ENCODE measurements at regions of chr22 and their contacts with region 1.

Region 1: DNA sequence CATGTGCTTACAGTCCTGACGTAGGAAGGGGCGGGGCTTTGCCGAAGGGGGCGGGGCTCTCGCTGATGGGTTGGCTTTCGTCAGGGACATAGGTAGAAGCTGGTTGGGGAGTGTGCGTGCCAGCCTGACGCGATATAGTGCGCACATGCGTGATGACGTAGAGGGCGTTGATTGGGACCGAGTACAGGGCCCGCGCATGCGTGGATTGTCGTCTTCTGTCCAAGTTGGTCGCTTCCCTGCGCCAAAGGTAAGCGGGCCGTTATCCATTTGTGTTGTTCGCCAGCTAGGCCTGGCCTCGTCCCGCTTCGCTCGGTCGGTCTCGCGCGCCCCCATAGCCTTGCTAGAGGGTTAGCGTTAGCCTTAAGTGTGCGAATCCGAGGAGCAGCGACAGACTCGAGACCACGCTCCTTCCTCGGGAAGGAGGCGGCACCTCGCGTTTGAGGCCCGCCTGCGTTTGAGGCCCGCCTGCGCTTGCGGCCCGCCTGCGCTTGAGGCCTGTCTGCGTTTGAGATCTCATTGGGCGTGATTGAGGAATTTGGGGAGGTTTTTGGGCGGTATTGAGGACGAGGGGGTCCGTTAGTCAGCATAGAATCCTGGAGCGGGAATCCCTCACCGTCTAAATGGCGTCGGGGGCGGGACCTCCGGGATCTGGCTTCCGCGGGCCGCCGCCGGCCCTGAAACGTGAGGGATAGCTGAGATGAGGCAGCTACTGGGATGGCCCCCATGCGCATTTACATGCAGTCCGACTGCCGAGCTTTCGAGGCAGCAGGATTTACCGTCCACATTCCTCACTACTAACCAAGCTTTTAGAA is at the start of gene XRCC6:
- DNase-seq: peak; percentile 99
- H3K4me3 Mint-ChIP-seq: peak within 1 kb of the TSS; percentile 99
- H3K27ac Mint-ChIP-seq: peak within 1 kb of the TSS; percentile 99
- H3K4me1 Mint-ChIP-seq: peaks cover 34% of the 10 kb centered on the region
- H3K27me3 Mint-ChIP-seq: no peaks in the 10 kb centered on the region
- total RNA-seq, gene XRCC6: 400 and 414 TPM in 2 replicates

Region 2: DNA sequence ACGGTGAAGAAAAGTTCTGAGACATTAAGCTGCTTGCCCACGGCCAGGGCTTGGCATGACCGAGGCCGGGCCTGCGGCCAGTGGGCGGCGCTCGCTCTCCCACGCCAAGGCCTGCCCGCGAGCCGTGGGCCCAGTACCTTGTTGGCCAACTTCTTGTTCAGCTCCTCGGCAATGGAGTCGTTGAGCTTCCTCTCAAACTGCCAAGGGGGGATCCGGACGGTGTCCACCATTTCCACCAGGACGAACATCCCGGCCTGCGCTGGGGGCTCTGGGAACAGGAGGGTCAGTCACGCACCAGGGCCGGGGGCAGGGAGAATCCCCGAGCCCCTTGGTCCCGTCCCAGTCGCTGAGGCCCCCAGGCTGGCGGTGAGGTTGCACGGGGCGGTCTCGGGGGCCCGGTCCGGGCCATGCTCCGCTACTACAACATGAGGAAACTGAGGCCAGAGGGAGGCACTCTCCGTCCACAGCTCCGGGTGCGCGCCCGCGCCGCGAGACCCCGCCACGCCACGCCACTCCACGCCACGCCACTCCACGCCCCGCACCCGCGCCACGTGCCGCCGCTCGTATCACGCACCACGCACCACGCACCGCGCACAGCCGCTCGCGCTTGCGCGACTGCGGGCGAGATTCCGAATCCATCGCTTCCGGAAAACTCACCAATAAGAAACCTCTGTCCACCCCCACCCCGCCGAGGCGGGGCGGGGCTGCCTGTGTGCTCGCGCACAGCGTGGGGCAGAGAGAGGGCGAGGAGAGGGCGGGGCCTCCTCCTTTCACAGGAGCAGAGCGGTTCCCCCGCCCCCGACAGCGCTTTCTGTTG is 77.2 kb before region 1 on chr22 and contains the start of gene POLR3H:
- intact Hi-C with region 1: loop called (anchors 1 kb)
- DNase-seq: peak; percentile 99
- H3K4me3 Mint-ChIP-seq: peak within 1 kb of the TSS; percentile 95
- H3K27ac Mint-ChIP-seq: peak within 1 kb of the TSS; percentile 89
- H3K4me1 Mint-ChIP-seq: peaks cover 29% of the 10 kb centered on the region
- H3K27me3 Mint-ChIP-seq: no peaks in the 10 kb centered on the region
- total RNA-seq, gene POLR3H: 49.2 and 50.6 TPM in 2 replicates

Region 3: GRCh38 chr22:41578818-41579217 is 42.5 kb before region 1 on chr22:
- intact Hi-C with region 1: no loop called
- DNase-seq: no peak
- H3K4me3 Mint-ChIP-seq: no peak overlapping the region
- H3K27ac Mint-ChIP-seq: no peak overlapping the region
- H3K4me1 Mint-ChIP-seq: peaks cover 3% of the 10 kb centered on the region
- H3K27me3 Mint-ChIP-seq: no peaks in the 10 kb centered on the region

Region 4: DNA sequence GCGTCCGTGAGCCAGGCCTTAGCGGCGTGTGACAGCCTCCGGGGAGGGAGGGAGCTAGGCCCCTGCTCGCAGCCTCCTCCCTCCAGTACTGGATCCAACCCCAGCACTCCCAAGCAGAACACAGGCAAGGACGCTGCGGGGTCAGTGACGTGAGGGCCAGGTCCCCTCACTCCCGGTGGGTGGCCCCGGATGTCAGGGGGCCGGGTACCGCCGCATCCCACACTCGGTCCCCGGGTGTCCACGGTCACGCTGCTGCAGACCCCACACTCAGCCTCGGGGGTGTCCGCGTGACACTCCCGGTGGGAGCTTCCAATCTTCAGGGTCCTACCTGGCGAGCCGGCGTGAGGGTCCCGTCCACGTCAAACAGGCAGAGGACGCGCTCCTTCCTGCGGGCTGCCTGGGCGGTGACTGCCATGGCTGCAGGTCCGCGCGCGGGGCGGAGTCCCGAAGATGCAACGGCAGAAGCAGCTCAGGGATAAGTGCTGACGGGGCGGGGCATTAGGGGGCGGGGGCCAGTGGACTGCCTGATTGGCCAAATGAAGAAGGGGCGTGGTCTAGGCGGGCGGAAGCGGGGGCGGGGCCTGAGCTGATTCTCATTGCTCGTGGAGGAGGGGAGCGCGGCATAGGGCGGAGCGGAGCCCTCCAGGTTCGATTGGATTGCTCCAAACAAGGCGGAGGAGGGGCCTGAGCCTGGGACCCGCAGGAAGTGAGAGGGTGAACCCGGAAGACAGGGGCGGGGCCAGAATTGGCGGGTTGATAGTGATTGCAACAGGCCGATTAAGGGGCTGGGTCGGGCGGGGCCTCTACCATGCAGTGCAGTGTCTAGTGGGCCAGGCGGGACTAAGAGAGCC is 31.7 kb before region 1 on chr22 and contains the start of gene PMM1:
- intact Hi-C with region 1: loop called (anchors 1 kb)
- DNase-seq: peak; percentile 100
- H3K4me3 Mint-ChIP-seq: peak within 1 kb of the TSS; percentile 95
- H3K27ac Mint-ChIP-seq: peak within 1 kb of the TSS; percentile 86
- H3K4me1 Mint-ChIP-seq: peaks cover 23% of the 10 kb centered on the region
- H3K27me3 Mint-ChIP-seq: no peaks in the 10 kb centered on the region
- total RNA-seq, gene PMM1: 19.7 and 23.1 TPM in 2 replicates

Region 5: GRCh38 chr22:41603873-41604332 is 17.4 kb before region 1 on chr22:
- intact Hi-C with region 1: loop called (anchors 1 kb)
- DNase-seq: peak; percentile 89
- H3K4me3 Mint-ChIP-seq: no peak overlapping the region
- H3K27ac Mint-ChIP-seq: peak overlapping the region; percentile 74
- H3K4me1 Mint-ChIP-seq: peaks cover 32% of the 10 kb centered on the region
- H3K27me3 Mint-ChIP-seq: peaks cover 5% of the 10 kb centered on the region

Region 6: DNA sequence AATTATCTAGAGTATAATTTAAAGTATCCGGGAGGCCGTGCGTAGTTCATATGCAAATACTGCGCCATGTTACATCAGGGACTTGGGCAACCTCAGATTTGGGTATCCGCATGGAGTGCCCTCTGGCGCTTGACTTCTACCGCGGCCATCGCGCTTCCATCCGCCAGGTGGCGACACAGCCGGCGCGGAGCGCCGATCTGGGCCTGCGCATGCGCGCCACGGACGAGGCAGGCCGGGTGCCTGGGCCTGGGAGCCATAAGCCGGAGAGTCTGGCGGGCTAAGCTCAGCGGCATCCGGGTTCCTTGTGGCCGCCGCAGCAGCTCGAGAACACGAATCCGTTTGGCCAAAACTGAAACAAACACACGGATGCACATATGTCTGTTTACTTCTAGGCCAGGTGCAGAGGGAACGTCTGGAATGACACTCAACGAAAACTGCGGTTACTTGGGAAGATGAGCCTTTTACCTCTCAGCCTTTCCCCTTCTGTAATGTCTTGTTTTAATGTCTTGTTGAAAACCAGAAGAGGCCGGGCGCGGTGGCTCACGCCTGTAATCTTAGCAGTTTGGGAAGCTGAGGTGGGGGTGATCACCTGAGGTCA is 45.5 kb after region 1 on chr22:
- intact Hi-C with region 1: loop called (anchors 1 kb)
- DNase-seq: peak; percentile 99
- H3K4me3 Mint-ChIP-seq: peak overlapping the region; percentile 83
- H3K27ac Mint-ChIP-seq: peak overlapping the region; percentile 92
- H3K4me1 Mint-ChIP-seq: peaks cover 9% of the 10 kb centered on the region
- H3K27me3 Mint-ChIP-seq: no peaks in the 10 kb centered on the region

Region 7: DNA sequence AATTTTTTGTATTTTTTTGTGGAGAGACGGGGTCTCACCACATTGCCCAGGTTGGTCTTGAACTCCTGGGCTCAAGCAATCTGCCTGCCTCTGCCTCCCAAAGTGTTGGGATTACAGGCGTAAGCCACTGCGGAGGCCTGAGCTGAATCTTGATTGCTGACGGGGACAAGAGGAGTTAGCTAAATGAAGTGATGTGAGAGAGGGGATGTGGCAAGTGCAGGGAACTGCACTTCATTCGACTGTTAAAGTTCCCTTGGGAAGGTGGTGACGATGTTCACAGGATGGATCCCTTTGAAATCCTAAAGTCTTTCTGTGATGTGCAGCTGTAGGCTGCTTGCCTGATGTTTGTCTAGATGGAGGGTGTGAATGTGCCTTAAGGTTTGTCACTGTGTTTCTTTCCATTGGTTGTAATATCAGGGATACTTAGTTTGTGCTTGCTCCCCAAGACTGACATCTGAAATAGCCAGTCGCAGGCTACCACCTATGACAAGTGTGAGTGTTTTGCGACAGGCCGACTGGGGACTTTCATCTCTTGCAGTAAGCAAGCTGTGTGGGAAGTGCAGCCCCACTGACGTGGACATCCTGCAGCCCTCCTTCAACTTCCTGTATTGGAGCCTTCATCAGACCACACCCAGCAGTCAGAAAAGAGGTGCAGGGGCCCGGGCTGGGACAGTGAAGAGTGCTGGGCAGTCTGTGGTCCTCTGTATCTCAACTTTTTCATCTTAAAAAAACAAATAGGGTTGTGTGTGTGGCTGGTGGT is 159.6 kb after region 1 on chr22:
- intact Hi-C with region 1: loop called (anchors 5 kb)
- DNase-seq: peak; percentile 97
- H3K4me3 Mint-ChIP-seq: peak overlapping the region; percentile 83
- H3K27ac Mint-ChIP-seq: peak overlapping the region; percentile 97
- H3K4me1 Mint-ChIP-seq: peaks cover 36% of the 10 kb centered on the region
- H3K27me3 Mint-ChIP-seq: no peaks in the 10 kb centered on the region

Region 8: DNA sequence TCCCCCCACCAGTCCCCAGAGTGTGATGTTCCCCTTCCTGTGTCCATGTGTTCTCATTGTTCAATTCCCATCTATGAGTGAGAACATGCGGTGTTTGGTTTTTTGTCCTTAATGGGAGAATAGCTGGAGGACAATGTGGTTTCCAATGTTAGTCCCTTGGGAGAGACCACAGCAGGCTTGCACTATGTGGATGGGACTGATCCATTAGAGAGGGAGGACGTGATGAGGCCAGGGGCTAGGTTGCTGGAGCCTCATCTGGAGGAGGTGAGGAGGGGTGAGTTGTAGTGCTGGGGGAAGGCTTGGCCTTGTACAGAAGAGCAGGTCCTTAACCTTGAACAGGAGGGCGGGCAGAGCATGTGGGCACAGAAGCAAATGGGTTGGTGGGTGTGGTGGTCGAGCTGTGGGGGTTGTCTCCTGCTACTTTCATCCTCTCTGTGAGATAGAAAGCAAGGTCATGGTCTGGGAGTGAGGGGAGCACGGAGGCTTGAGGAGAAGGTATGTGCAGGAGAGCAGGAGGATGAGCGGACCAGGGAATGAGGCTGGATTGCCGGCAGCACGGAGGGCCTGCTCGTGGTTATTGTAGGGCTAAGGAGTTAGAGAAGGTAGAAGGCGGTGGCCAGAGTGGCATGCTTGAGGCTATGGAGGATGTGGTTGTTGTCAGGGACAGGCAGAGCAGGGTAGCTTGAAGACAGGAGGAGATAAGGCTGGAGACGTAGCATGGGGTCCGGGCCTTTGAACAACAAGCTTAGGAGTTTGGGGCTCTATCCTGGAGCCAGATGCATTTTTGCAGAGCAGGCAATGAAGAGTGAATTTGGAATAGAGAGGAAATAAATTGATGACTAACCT is 200.4 kb after region 1 on chr22:
- intact Hi-C with region 1: no loop called
- DNase-seq: no peak
- H3K4me3 Mint-ChIP-seq: no peak overlapping the region
- H3K27ac Mint-ChIP-seq: peak overlapping the region; percentile 89
- H3K4me1 Mint-ChIP-seq: peaks cover 26% of the 10 kb centered on the region
- H3K27me3 Mint-ChIP-seq: no peaks in the 10 kb centered on the region